Pancreas (tissue), 10 donors: ENCODE measurements at regions of chr2 and their contacts with region 1.

Region 1: GRCh38 chr2:199985625-199986207 is 30.3 kb downstream of the MAIP1 start:
- DNase-seq: peak in 5 of 6 donors; percentile 60 to 74 (median 62)
- ATAC-seq: peak; percentile 88 to 99 (median 98)
- H3K4me3 ChIP-seq: no peak overlapping the region
- H3K27ac ChIP-seq: no peak overlapping the region
- H3K4me1 ChIP-seq: no peaks in the 10 kb centered on the region
- H3K27me3 ChIP-seq: no peaks in the 10 kb centered on the region
- CTCF ChIP-seq: peak; percentile 31 to 62 (median 48)

Region 2: GRCh38 chr2:200306196-200306930 is 320.6 kb after region 1 on chr2 and contains the start of gene SPATS2L:
- intact Hi-C with region 1: loop called in 1 of 3 experiments (anchors 10 kb)
- DNase-seq: peak; percentile 70 to 89 (median 80)
- ATAC-seq: peak; percentile 61 to 78 (median 74)
- H3K4me3 ChIP-seq: peak within 1 kb of the TSS; percentile 72 to 96 (median 92)
- H3K27ac ChIP-seq: peak within 1 kb of the TSS; percentile 87 to 95 (median 90)
- H3K4me1 ChIP-seq: peaks cover 4 to 7% (median 6%) of the 10 kb centered on the region in 3 donors
- H3K27me3 ChIP-seq: no peaks in the 10 kb centered on the region
- CTCF ChIP-seq: no peak
- total RNA-seq, gene SPATS2L: 28.8 to 87.0 (median 40.8) TPM